Motor neuron (in vitro differentiated cells): ENCODE measurements at regions of chr5 and their contacts with region 1.

Region 1: DNA sequence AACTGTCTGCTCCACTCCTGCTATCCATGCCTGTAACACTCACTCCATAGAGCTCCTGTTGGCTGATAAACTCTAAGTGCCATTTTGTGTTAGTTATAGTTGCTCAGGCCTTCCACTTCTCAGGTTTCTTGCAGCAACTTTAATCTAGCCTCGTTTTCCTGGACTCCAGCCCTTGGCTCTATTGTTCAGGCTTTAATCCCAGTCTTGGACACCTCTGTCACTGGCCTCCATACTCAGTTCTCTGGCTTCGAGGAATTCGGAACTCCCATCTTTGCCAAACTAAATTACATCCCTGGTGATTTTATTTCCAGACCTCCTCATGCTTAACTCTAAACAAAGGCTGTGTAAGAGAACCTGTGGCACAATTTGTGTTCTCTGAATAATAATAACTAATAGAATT is 39.8 kb downstream of the EMB start:
- ATAC-seq: no peak
- H3K4me3 ChIP-seq: no peak overlapping the region
- H3K27ac ChIP-seq: no peak overlapping the region
- H3K4me1 ChIP-seq: no peaks in the 10 kb centered on the region

Region 2: GRCh38 chr5:50292755-50293394 is 108.5 kb before region 1 on chr5:
- in situ Hi-C with region 1: loop called in 1 of 9 experiments (anchors 25 kb)
- ATAC-seq: no peak
- H3K4me3 ChIP-seq: no peak overlapping the region
- H3K27ac ChIP-seq: no peak overlapping the region
- H3K4me1 ChIP-seq: no peaks in the 10 kb centered on the region

Region 3: GRCh38 chr5:51138164-51138563 is 736.8 kb after region 1 on chr5:
- in situ Hi-C with region 1: no loop called
- ATAC-seq: no peak
- H3K4me3 ChIP-seq: no peak overlapping the region
- H3K27ac ChIP-seq: no peak overlapping the region
- H3K4me1 ChIP-seq: no peaks in the 10 kb centered on the region